Gastrocnemius medialis (tissue), 4 donors: ENCODE measurements at regions of chr6 and their contacts with region 1.

Region 1: DNA sequence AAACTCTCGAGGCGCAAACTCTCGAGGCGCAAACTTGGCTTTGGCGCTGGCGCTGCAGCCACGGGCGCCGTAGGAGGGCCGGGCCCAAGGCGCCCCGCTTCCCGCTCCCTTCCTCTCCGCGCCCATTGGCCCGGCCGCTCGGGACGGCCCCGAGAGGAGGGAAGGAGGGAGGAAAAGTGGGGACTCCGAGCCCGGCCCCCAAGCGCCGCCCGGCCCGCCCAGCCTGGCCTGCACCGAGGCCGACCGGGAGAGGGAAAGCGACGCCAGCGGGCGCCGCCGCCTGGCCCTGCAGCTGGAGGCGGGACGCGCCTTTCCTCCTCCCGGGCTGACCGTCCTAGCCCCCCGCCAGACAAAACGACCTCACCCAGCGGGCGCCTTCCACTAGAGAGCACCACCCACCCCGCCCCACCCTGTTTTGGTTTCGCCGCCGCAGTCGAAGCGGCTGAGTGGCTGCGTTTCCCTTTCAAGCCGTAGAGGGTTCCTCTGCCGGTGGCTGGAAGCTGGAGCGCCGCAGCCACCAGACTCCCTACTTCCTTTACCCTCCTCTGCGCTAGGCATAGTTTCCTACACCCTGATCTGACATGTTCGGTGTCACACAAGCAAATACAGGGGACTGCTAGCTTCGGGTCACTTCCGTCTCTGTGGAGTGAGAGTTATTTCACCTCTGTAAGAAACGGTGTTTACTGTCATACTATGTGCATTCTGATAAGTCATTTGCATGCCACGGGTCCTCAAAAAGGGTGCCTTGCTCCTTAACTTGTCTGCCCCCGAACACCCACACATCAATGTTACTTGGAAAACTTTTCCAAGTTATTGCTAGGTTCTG is at the start of gene MBOAT1:
- DNase-seq: peak; percentile 76 to 80
- ATAC-seq: peak; percentile 83 to 88
- H3K4me3 ChIP-seq: peak within 1 kb of the TSS; percentile 64 to 77 (median 71)
- H3K27ac ChIP-seq: peak within 1 kb of the TSS; percentile 72 to 81 (median 74)
- H3K4me1 ChIP-seq: peaks cover 8% of the 10 kb centered on the region in 2 donors
- H3K27me3 ChIP-seq: no peaks in the 10 kb centered on the region
- CTCF ChIP-seq: peak in 2 of 5 experiments; percentile 21 to 32
- POLR2A ChIP-seq: peak; percentile 46 to 61
- total RNA-seq, gene MBOAT1: 0.61 to 1.8 (median 1.1) TPM

Region 2: GRCh38 chr6:20126789-20127653 is 85.6 kb before region 1 on chr6:
- in situ Hi-C with region 1: no loop called
- intact Hi-C with region 1: loop called (anchors 10 kb)
- DNase-seq: peak; percentile 16 to 31
- ATAC-seq: peak; percentile 70 to 79
- H3K4me3 ChIP-seq: peak overlapping the region in 2 of 4 donors; percentile 20 to 26
- H3K27ac ChIP-seq: peak overlapping the region; percentile 25 to 70 (median 41)
- H3K4me1 ChIP-seq: peaks cover 5 to 6% of the 10 kb centered on the region in 2 donors
- H3K27me3 ChIP-seq: no peaks in the 10 kb centered on the region
- CTCF ChIP-seq: peak; percentile 74 to 94 (median 77)
- POLR2A ChIP-seq: no peak

Region 3: GRCh38 chr6:20169119-20169557 is 43.5 kb before region 1 on chr6:
- in situ Hi-C with region 1: no loop called
- intact Hi-C with region 1: loop called (anchors 5 kb)
- DNase-seq: peak; percentile 21 to 39
- ATAC-seq: peak; percentile 72 to 75
- H3K4me3 ChIP-seq: peak overlapping the region in 1 of 4 donors; percentile 9
- H3K27ac ChIP-seq: peak overlapping the region; percentile 14 to 53 (median 44)
- H3K4me1 ChIP-seq: no peaks in the 10 kb centered on the region
- H3K27me3 ChIP-seq: no peaks in the 10 kb centered on the region
- CTCF ChIP-seq: no peak
- POLR2A ChIP-seq: no peak